B cell (primary cell): ENCODE measurements at regions of chr4 and their contacts with region 1.

Region 1: DNA sequence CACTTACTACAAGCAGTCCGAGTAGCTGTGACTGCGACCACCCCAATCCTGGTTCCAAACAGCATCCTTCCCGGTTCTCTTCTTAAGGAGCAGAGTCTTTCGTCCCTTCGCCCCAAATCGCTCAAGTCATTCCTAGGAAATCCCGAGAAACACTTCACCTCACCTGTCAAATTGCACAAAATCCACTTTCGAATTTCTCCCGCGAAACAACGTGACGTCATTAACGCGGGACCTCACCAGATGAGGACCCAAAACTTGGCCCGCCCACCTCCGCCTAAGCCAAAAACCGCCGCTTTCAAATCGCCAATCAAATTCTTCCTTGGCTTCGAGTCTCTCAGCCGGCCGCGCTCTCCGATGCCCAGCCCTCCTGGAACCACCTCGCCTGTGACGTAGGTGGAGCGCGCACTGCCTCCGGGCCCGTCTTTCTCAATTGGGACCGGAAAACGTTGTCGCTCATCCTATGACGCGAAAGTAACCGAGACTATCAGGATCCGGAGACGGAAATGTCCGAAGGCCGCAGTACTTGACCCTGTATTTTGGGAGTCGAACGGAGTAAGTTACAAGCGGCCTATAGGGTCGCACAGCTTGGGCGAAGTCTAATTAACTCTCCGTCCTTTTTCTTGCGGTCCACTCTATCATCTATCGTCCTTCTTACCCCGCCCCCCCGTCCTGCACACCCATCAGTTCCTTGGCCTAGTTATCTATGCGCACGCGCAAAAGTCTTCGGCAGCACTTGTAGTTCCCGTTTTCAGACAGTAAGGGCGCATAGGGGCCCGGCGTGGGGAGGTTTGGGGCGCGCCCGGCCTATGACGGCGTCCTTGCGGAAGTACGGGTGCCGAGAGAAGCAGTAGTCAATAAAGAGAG is at the starts of genes LARP7 and ZGRF1:
- DNase-seq: peak; percentile 99
- ATAC-seq: peak; percentile 86
- H3K4me3 ChIP-seq: peak within 1 kb of the TSS; percentile 54 to 94 (median 74)
- H3K4me3 Mint-ChIP-seq: no peak within 1 kb of the TSS
- H3K27ac ChIP-seq: peak within 1 kb of the TSS; percentile 84 to 97
- H3K27ac Mint-ChIP-seq: no peak within 1 kb of the TSS
- H3K4me1 ChIP-seq: peaks cover 13 to 19% of the 10 kb centered on the region in 2 donors
- H3K4me1 Mint-ChIP-seq: peaks cover 22% of the 10 kb centered on the region
- H3K27me3 ChIP-seq: no peaks in the 10 kb centered on the region
- H3K27me3 Mint-ChIP-seq: no peaks in the 10 kb centered on the region
- CTCF ChIP-seq: peak; percentile 92
- total RNA-seq, gene LARP7: 57.4 and 62.2 TPM in 2 replicates
- total RNA-seq, gene ZGRF1: 13.0 and 18.6 TPM in 2 replicates

Region 2: DNA sequence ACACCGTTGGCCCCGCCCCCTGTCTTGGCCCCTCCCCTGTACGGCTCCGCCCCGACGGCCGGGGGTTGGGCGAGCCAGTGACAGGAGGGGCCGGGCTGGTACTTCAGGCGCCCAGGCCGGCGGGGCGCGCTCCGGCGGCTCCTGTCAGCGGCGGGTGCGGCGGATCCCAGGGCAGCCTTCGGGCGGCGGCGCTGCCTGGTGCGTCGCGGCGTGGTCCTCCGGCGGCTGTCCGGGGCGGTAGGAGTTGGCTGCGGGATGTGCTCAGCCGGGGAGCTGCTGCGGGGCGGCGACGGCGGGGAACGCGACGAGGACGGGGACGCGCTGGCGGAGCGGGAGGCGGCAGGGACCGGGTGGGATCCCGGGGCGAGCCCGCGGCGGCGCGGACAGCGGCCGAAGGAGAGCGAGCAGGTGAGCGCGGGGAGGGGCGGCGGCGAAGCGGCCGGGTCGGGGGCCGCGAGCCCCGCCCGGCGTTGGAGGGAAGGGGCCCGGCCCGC is 491.5 kb before region 1 on chr4 and contains the start of gene FAM241A:
- CTCF ChIA-PET with region 1: no interaction called
- POLR2A ChIA-PET with region 1: no interaction called
- intact Hi-C with region 1: loop called (anchors 2 kb)
- DNase-seq: peak; percentile 89
- ATAC-seq: peak; percentile 98
- H3K4me3 ChIP-seq: peak within 1 kb of the TSS; percentile 66 to 97 (median 77)
- H3K4me3 Mint-ChIP-seq: peak within 1 kb of the TSS; percentile 89
- H3K27ac ChIP-seq: peak within 1 kb of the TSS; percentile 51 to 84
- H3K27ac Mint-ChIP-seq: peak within 1 kb of the TSS; percentile 74
- H3K4me1 ChIP-seq: peaks cover 8 to 12% of the 10 kb centered on the region in 2 donors
- H3K4me1 Mint-ChIP-seq: peaks cover 16% of the 10 kb centered on the region
- H3K27me3 ChIP-seq: no peaks in the 10 kb centered on the region
- H3K27me3 Mint-ChIP-seq: no peaks in the 10 kb centered on the region
- CTCF ChIP-seq: no peak
- total RNA-seq, gene FAM241A: 0.79 and 0.95 TPM in 2 replicates

Region 3: GRCh38 chr4:112655270-112655669 is 18.4 kb after region 1 on chr4:
- CTCF ChIA-PET with region 1: no interaction called
- POLR2A ChIA-PET with region 1: no interaction called
- intact Hi-C with region 1: no loop called
- DNase-seq: no peak
- ATAC-seq: no peak
- H3K4me3 ChIP-seq: no peak overlapping the region
- H3K4me3 Mint-ChIP-seq: no peak overlapping the region
- H3K27ac ChIP-seq: no peak overlapping the region
- H3K27ac Mint-ChIP-seq: no peak overlapping the region
- H3K4me1 ChIP-seq: no peaks in the 10 kb centered on the region
- H3K4me1 Mint-ChIP-seq: no peaks in the 10 kb centered on the region
- H3K27me3 ChIP-seq: no peaks in the 10 kb centered on the region
- H3K27me3 Mint-ChIP-seq: no peaks in the 10 kb centered on the region
- CTCF ChIP-seq: no peak

Region 4: GRCh38 chr4:112865443-112865842 is 228.5 kb after region 1 on chr4:
- CTCF ChIA-PET with region 1: no interaction called
- POLR2A ChIA-PET with region 1: no interaction called
- intact Hi-C with region 1: no loop called
- DNase-seq: no peak
- ATAC-seq: no peak
- H3K4me3 ChIP-seq: no peak overlapping the region
- H3K4me3 Mint-ChIP-seq: no peak overlapping the region
- H3K27ac ChIP-seq: no peak overlapping the region
- H3K27ac Mint-ChIP-seq: no peak overlapping the region
- H3K4me1 ChIP-seq: no peaks in the 10 kb centered on the region
- H3K4me1 Mint-ChIP-seq: no peaks in the 10 kb centered on the region
- H3K27me3 ChIP-seq: no peaks in the 10 kb centered on the region
- H3K27me3 Mint-ChIP-seq: no peaks in the 10 kb centered on the region
- CTCF ChIP-seq: no peak

Region 5: DNA sequence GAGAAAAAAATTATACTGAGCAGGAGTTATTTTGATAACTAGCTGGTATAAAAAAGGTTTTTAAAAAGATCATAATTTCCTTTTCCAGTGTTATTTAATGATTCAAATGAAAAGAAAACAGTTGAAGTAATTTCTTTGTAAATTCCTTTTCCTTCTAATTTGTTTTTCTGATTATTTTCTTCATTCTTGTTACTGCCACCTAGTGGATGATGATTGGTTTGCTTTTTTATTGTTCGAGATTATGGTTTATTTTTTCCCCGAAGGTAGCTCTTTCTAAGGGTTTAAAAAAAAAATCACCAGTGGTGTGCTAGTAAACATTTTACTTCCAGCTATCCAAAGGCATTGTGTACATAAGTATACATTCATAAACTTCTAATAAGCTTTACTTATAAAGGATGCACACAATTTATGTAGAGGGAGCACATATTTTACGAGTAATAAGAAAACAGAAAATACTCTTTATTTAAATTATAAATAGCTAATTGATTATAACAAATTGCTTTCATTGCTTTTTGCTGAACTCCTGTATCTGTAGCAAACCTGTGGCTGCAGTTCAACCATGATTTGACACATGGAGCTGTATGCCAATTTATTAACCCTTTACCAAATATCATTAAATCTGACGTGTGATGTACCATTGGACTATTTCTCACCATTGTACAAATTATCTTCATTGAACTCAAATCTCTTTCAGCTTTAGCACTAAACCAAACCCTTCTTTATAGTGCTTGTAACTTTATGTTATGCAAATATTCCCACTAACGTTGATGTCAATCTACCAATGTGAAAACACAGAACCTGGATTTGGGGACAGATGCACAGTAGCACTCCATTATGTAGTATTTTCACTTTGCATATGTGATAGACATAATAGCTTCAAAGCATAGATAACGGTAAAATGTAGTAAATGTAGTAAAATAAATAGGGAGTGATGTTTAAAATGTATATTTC is 314.7 kb after region 1 on chr4:
- CTCF ChIA-PET with region 1: no interaction called
- POLR2A ChIA-PET with region 1: no interaction called
- intact Hi-C with region 1: loop called (anchors 5 kb)
- DNase-seq: peak; percentile 11
- ATAC-seq: no peak
- H3K4me3 ChIP-seq: no peak overlapping the region
- H3K4me3 Mint-ChIP-seq: no peak overlapping the region
- H3K27ac ChIP-seq: no peak overlapping the region
- H3K27ac Mint-ChIP-seq: no peak overlapping the region
- H3K4me1 ChIP-seq: no peaks in the 10 kb centered on the region
- H3K4me1 Mint-ChIP-seq: peaks cover 2% of the 10 kb centered on the region
- H3K27me3 ChIP-seq: peaks cover 0 to 4% (median 0%) of the 10 kb centered on the region in 4 experiments
- H3K27me3 Mint-ChIP-seq: no peaks in the 10 kb centered on the region
- CTCF ChIP-seq: peak; percentile 84